ENCODE measurements at regions of chr14 and their contacts with region 1.

Region 1: GRCh38 chr14:103528587-103529382 is at the start of gene TRMT61A:
- DNase-seq: peak; percentile 85
- ATAC-seq: peak; percentile 42
- H3K4me3 ChIP-seq: peak within 1 kb of the TSS; percentile 53 to 94 (median 86)
- H3K4me3 Mint-ChIP-seq: peak within 1 kb of the TSS; percentile 88
- H3K27ac ChIP-seq: peak within 1 kb of the TSS; percentile 73 to 84
- H3K27ac Mint-ChIP-seq: peak within 1 kb of the TSS; percentile 96
- H3K4me1 ChIP-seq: peaks cover 33 to 49% of the 10 kb centered on the region in 2 donors
- H3K4me1 Mint-ChIP-seq: peaks cover 50% of the 10 kb centered on the region
- H3K27me3 ChIP-seq: peaks cover 0 to under 1% (median under 1%) of the 10 kb centered on the region in 4 experiments
- H3K27me3 Mint-ChIP-seq: no peaks in the 10 kb centered on the region
- CTCF ChIP-seq: no peak
- total RNA-seq, gene TRMT61A: 9.5 and 12.3 TPM in 2 replicates

Region 2: GRCh38 chr14:103546652-103547454 is 18.1 kb after region 1 on chr14:
- CTCF ChIA-PET with region 1: interaction called, 33 read pairs
- POLR2A ChIA-PET with region 1: no interaction called
- intact Hi-C with region 1: no loop called
- DNase-seq: peak; percentile 82
- ATAC-seq: peak; percentile 83
- H3K4me3 ChIP-seq: no peak overlapping the region
- H3K4me3 Mint-ChIP-seq: no peak overlapping the region
- H3K27ac ChIP-seq: no peak overlapping the region
- H3K27ac Mint-ChIP-seq: no peak overlapping the region
- H3K4me1 ChIP-seq: peaks cover 0 to 6% of the 10 kb centered on the region in 2 donors
- H3K4me1 Mint-ChIP-seq: peaks cover 4% of the 10 kb centered on the region
- H3K27me3 ChIP-seq: peaks cover 0 to 22% (median 2%) of the 10 kb centered on the region in 4 experiments
- H3K27me3 Mint-ChIP-seq: no peaks in the 10 kb centered on the region
- CTCF ChIP-seq: peak; percentile 95

Region 3: DNA sequence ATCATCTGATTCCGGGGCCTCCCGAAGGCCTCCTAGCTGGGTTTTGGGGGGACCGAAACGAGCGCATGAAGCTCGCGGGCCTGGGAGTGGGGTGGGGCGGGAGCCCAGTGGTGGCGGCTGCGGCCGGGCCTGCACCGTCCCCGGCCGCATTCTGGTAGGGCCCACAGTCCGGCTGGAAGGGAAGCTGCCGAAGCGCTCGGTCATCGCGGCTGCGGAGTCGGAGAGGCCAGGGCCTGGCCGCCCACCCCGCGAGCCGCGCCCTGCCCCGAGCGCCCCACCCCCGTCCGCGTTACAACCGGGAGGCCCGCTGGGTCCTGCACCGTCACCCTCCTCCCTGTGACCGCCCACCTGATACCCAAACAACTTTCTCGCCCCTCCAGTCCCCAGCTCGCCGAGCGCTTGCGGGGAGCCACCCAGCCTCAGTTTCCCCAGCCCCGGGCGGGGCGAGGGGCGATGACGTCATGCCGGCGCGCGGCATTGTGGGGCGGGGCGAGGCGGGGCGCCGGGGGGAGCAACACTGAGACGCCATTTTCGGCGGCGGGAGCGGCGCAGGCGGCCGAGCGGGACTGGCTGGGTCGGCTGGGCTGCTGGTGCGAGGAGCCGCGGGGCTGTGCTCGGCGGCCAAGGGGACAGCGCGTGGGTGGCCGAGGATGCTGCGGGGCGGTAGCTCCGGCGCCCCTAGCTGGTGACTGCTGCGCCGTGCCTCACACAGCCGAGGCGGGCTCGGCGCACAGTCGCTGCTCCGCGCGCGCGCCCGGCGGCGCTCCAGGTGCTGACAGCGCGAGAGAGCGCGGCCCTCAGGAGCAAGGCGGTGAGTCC is 100.1 kb after region 1 on chr14 and contains the start of gene KLC1:
- CTCF ChIA-PET with region 1: no interaction called
- POLR2A ChIA-PET with region 1: no interaction called
- intact Hi-C with region 1: no loop called
- DNase-seq: peak; percentile 90
- ATAC-seq: peak; percentile 74
- H3K4me3 ChIP-seq: peak within 1 kb of the TSS; percentile 66 to 86 (median 75)
- H3K4me3 Mint-ChIP-seq: peak within 1 kb of the TSS; percentile 88
- H3K27ac ChIP-seq: peak within 1 kb of the TSS; percentile 73 to 83
- H3K27ac Mint-ChIP-seq: peak within 1 kb of the TSS; percentile 95
- H3K4me1 ChIP-seq: peaks cover 41 to 46% of the 10 kb centered on the region in 2 donors
- H3K4me1 Mint-ChIP-seq: peaks cover 55% of the 10 kb centered on the region
- H3K27me3 ChIP-seq: no peaks in the 10 kb centered on the region
- H3K27me3 Mint-ChIP-seq: no peaks in the 10 kb centered on the region
- CTCF ChIP-seq: no peak
- total RNA-seq, gene KLC1: 243 and 249 TPM in 2 replicates

Region 4: DNA sequence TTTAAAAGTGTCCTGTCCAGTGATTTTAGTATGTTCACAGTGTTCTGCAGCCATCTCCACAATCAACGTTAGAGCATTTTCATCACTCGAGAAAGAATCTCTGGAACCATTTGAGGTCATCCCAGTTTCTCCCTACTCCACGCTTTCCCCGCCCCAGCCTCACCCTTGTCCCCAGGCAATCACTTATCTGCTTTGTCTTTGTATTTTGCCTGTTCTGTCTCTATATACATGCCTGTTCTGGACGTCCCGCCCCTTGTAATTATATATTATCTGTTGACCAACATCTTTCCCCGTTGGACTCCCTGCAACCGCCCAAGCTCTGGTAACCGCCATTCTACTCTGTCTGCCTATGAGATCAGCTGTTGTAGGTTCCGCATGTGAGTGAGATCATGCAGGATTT is 535.2 kb after region 1 on chr14:
- CTCF ChIA-PET with region 1: no interaction called
- POLR2A ChIA-PET with region 1: no interaction called
- intact Hi-C with region 1: no loop called
- DNase-seq: no peak
- ATAC-seq: no peak
- H3K4me3 ChIP-seq: no peak overlapping the region
- H3K4me3 Mint-ChIP-seq: no peak overlapping the region
- H3K27ac ChIP-seq: no peak overlapping the region
- H3K27ac Mint-ChIP-seq: no peak overlapping the region
- H3K4me1 ChIP-seq: no peaks in the 10 kb centered on the region
- H3K4me1 Mint-ChIP-seq: no peaks in the 10 kb centered on the region
- H3K27me3 ChIP-seq: peaks cover 0 to 17% (median 4%) of the 10 kb centered on the region in 4 experiments
- H3K27me3 Mint-ChIP-seq: peaks cover 42% of the 10 kb centered on the region
- CTCF ChIP-seq: no peak

Measured in B cell (primary cell).